ENCODE measurements at regions of chr6 and their contacts with region 1.

Region 1: GRCh38 chr6:90940812-90941481 is 354.1 kb upstream of the MAP3K7 start:
- DNase-seq: peak; percentile 36
- ATAC-seq: peak; percentile 80
- H3K4me3 ChIP-seq: no peak overlapping the region
- H3K27ac ChIP-seq: no peak overlapping the region
- H3K4me1 ChIP-seq: no peaks in the 10 kb centered on the region
- H3K27me3 ChIP-seq: no peaks in the 10 kb centered on the region
- CTCF ChIP-seq: peak; percentile 58; the same call in 1 of the 2 replicates

Region 2: DNA sequence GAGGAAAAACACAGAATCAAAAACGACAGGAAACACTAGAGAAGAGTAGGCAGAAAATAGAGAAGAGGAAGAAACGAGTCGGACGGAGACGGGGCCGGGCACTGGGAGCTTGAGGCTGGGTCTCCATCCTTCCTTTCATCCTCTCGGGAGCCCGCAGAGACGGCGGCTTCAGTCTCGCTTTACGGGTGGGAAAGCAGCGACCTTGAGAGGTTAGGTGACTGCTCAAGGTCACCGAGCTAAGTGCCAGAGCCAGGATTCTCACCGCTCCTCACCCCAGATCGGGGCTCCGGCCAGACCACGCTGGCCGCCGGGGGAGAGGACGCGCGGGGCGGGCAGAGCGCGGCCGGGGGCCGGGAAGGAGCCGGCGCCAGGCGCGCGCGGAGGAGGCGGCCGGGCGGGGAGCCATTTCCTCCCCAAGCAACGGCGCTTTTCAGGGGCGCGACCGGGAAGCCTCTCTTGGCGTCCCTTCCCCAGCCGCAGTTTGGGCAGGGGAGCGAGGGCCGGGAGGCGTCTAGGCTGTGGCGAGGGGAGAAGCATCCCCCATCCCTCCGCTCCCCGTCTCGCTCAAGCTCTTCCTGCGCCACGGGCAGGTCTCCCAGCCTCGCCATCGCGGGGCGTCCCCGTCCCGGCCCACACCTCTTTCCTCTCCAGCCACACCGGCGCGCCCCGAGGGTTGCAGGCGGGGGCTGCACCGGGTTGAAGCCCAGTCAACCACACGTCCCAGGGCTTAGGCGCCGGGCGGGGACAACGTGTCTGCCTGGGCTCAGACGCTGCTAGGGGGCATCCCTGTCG is 330.0 kb before region 1 on chr6:
- CTCF ChIA-PET with region 1: no interaction called
- POLR2A ChIA-PET with region 1: no interaction called
- in situ Hi-C with region 1: no loop called
- intact Hi-C with region 1: loop called (anchors 10 kb)
- DNase-seq: no peak
- ATAC-seq: peak; percentile 83
- H3K4me3 ChIP-seq: peak overlapping the region; percentile 43 to 58
- H3K27ac ChIP-seq: no peak overlapping the region
- H3K4me1 ChIP-seq: peaks cover 5% of the 10 kb centered on the region; the same call in 1 of the 2 replicates
- H3K27me3 ChIP-seq: peaks cover 41% of the 10 kb centered on the region
- CTCF ChIP-seq: peak; percentile 31

Region 3: GRCh38 chr6:90790696-90791095 is 150.3 kb before region 1 on chr6:
- CTCF ChIA-PET with region 1: no interaction called
- POLR2A ChIA-PET with region 1: no interaction called
- in situ Hi-C with region 1: no loop called
- intact Hi-C with region 1: no loop called
- DNase-seq: no peak
- ATAC-seq: no peak
- H3K4me3 ChIP-seq: no peak overlapping the region
- H3K27ac ChIP-seq: no peak overlapping the region
- H3K4me1 ChIP-seq: no peaks in the 10 kb centered on the region
- H3K27me3 ChIP-seq: no peaks in the 10 kb centered on the region; the same call in 1 of the 2 replicates
- CTCF ChIP-seq: no peak

Region 4: DNA sequence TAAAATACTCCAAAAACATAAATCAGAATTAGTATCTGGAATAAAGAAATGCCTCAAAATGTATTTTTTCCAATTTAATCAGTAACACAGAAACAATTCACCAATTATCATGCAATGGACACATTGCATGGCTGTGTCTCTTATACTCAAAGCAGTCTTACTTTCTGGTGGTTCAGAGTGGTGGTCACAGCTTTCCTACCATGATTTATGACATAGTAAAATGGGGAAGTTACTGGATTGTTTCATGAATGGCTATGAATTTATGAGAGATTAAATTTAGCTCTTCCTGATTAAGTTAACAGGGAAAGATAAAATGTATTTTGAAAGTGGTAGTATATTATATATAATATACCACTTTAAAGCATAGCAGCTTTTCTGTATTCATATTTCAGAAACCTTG is 22.6 kb before region 1 on chr6:
- CTCF ChIA-PET with region 1: no interaction called
- POLR2A ChIA-PET with region 1: no interaction called
- in situ Hi-C with region 1: no loop called
- intact Hi-C with region 1: no loop called
- DNase-seq: no peak
- ATAC-seq: no peak
- H3K4me3 ChIP-seq: no peak overlapping the region
- H3K27ac ChIP-seq: no peak overlapping the region
- H3K4me1 ChIP-seq: no peaks in the 10 kb centered on the region
- H3K27me3 ChIP-seq: no peaks in the 10 kb centered on the region; the same call in 1 of the 2 replicates
- CTCF ChIP-seq: no peak

Region 5: DNA sequence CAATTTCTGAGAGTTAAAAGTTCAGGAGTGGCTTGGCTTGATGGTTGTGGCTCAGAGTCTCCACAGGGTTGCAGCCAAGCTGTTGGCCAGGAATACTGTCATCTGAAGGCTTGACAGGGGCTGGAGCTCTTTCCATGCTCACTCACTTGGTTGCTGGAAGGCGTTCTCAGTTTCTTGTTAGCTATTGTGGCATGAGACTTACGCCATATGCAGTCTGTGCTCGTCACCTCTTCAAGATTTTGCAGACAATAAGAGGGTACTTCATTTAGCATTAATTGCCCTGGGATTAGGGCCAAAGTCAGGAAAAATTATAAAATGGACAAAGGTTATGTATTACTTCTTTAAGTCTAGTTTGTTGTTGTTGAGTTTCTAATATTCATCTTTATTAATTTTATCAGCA is 26.5 kb after region 1 on chr6:
- CTCF ChIA-PET with region 1: no interaction called
- POLR2A ChIA-PET with region 1: no interaction called
- in situ Hi-C with region 1: no loop called
- intact Hi-C with region 1: no loop called
- DNase-seq: no peak
- ATAC-seq: no peak
- H3K4me3 ChIP-seq: no peak overlapping the region
- H3K27ac ChIP-seq: no peak overlapping the region
- H3K4me1 ChIP-seq: no peaks in the 10 kb centered on the region
- H3K27me3 ChIP-seq: no peaks in the 10 kb centered on the region
- CTCF ChIP-seq: no peak

Region 6: DNA sequence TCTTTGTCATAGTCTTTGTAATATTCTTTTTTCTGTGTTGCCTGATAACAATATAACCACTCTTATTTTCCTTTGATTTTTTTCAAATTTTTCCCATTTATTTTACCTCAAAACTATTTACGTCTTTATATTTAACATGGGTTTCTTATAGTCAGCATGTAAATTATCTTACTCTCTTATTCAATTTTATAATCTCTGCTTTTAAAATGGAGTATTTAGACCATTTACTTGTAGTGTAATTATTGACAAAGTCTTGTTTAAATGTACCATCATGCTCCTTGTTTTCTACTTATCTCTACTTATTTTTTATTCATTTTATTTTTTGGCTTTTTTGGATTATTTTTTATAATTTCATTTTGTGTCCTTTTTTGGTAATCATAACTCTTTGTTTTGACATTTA is 122.4 kb after region 1 on chr6:
- CTCF ChIA-PET with region 1: no interaction called
- POLR2A ChIA-PET with region 1: no interaction called
- in situ Hi-C with region 1: no loop called
- intact Hi-C with region 1: loop called (anchors 10 kb)
- DNase-seq: no peak
- ATAC-seq: no peak
- H3K4me3 ChIP-seq: no peak overlapping the region
- H3K27ac ChIP-seq: no peak overlapping the region
- H3K4me1 ChIP-seq: no peaks in the 10 kb centered on the region
- H3K27me3 ChIP-seq: no peaks in the 10 kb centered on the region
- CTCF ChIP-seq: no peak